ENCODE measurements at regions of chr15 and their contacts with region 1.

Region 1: DNA sequence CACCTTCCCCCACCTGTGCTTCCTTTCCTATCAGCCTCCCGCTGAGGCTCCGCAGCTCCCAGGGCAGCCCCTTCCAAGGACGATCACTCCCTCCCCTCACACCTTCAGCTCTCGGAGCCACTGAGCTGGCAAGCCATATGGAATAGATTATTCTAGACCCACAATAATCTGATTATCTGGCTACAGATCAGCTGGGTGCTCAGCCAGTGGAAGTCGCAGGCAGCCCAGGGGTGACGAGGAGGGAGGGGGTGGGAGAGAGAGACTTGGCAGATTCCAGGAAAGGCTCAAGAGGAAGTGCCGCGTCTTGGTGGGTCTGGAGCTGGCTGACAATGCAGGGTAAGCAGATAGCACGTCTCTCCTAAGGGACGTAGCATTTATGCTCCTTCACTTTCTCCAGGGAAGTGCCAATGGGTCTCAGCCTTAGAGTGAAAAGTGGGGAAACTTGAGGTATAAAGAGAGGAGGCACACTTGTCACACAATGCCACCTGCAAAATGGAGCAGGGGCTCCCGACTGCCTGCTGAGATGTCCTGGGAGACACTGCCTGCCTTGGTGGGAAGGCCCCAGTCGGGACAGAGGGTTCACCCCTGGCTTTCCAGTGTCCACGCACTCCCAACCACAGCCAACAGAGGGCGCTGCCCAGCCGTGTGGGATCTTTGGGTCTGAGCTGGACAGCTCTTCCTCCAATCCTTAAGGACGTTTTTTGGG is 9.4 kb upstream of the MESP1 start:
- DNase-seq: peak; percentile 87 to 90 (median 90)
- ATAC-seq: peak; percentile 99
- H3K4me3 ChIP-seq: no peak overlapping the region
- H3K27ac ChIP-seq: peak overlapping the region; percentile 58
- H3K4me1 ChIP-seq: peaks cover 13 to 26% of the 10 kb centered on the region in 2 experiments
- H3K27me3 ChIP-seq: no peaks in the 10 kb centered on the region
- CTCF ChIP-seq: peak; percentile 96 to 98 (median 97)
- EP300 ChIP-seq: no peak
- POLR2A ChIP-seq: no peak
- RAD21 ChIP-seq: peak; percentile 91 to 95

Region 2: DNA sequence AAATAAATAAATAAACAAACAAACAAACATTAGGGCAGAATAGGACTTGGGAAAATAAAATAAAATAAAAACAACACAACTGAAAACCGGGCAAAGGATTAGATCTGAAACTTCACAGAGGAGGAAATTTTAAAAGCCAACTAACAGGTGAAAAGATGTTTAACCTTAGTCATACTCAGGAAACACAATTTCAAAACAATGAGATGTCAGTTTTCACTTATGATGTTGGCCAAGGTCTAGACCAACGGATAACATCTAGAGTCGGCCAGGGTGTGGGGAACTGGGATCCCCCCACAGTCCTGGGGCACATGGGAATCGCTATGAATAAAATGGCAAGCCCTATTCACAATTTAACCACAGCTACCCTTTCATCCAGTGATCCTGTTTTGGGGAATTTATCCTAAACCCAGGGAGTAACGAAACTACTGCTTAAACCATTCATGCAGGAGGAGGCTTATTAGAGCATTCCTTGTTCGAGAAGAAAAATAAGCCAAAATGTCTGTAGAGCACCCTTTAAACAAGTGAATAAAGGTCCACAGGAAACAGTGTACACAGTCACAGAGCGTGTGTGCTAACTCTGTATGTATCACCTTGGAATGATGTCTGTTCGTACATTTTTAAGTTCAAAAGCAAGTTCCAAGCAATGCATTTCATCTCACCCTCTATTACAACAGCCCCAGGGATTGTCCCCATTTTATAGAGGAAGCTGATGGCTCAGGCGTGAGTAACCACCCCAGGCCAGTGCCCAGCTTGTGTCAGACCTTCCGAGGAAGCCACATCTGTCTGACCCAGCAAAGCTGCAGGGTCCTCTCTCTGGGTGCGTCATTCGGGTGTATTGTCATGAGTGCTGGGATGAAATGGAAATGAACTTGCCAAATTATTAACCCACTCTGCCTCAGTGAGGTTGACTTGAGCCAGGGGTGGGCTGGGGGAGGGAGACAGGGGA is 60.5 kb after region 1 on chr15:
- CTCF ChIA-PET with region 1: no interaction called
- POLR2A ChIA-PET with region 1: no interaction called
- in situ Hi-C with region 1: no loop called
- intact Hi-C with region 1: loop called (anchors 5 kb)
- DNase-seq: peak in 1 of 4 experiments; percentile 40
- ATAC-seq: peak; percentile 66
- H3K4me3 ChIP-seq: no peak overlapping the region
- H3K27ac ChIP-seq: peak overlapping the region; percentile 58; the same call in 2 of the 3 replicates
- H3K4me1 ChIP-seq: peaks cover 3 to 9% of the 10 kb centered on the region in 2 experiments; a peak in 2 of 5 replicates
- H3K27me3 ChIP-seq: no peaks in the 10 kb centered on the region
- CTCF ChIP-seq: no peak
- EP300 ChIP-seq: 0 out of 2 replicates have a peak, but pooled peaks have one; percentile 6
- POLR2A ChIP-seq: no peak
- RAD21 ChIP-seq: no peak

Region 3: GRCh38 chr15:89874926-89875564 is 114.6 kb after region 1 on chr15:
- CTCF ChIA-PET with region 1: interaction called, 28 read pairs
- POLR2A ChIA-PET with region 1: interaction called, 5 read pairs
- in situ Hi-C with region 1: loop called (anchors 5 kb)
- intact Hi-C with region 1: loop called (anchors 1 kb)
- DNase-seq: peak; percentile 76 to 83 (median 78)
- ATAC-seq: peak; percentile 100
- H3K4me3 ChIP-seq: no peak overlapping the region
- H3K27ac ChIP-seq: no peak overlapping the region
- H3K4me1 ChIP-seq: peaks cover 0 to 3% of the 10 kb centered on the region in 2 experiments; a peak in 1 of 5 replicates
- H3K27me3 ChIP-seq: no peaks in the 10 kb centered on the region
- CTCF ChIP-seq: peak; percentile 90 to 94 (median 90)
- EP300 ChIP-seq: no peak
- POLR2A ChIP-seq: no peak
- RAD21 ChIP-seq: peak; percentile 84 to 85

Measured in K562 (cell line).